Posterior cingulate gyrus (tissue), 11 donors: ENCODE measurements at regions of chr1 and their contacts with region 1.

Region 1: DNA sequence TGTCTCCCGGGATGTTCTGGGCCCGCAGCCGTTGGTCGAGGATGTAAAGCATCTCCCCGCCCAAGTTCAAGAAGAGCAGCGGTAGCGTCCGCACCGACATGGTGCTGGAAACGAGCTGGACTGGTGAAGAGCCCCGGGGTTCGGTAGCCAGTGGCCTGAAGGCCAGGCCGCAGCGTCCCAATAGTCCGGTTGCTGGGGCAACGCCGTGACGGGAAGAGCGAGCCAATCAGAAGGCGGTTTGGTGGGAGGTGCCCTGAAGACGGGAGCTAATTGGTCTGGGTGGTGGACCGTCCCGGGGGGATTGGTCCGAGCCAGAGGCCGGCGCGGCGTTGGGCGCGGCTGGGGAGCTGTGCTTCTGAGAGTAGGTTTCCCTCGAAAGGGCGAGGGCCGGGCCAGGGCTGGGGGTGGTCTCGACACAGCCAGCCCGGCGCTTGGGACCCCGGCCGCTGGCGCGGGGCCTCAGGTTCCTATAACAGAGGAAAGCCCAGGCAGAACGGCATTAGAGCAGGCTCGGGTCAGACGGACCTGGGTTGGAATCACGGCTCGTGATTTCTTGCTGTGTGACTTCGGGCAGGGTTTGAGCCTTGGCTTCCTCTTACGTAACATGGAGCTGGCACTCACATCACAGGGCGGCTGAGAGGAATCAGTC is at the start of gene OSCP1:
- DNase-seq: peak; percentile 88 to 99 (median 93)

Region 2: GRCh38 chr1:36109041-36109679 is 341.2 kb before region 1 on chr1:
- intact Hi-C with region 1: no loop called
- DNase-seq: no peak

Region 3: GRCh38 chr1:36463803-36464604 is 13.6 kb after region 1 on chr1 and contains the start of gene MRPS15:
- intact Hi-C with region 1: loop called (anchors 2 kb)
- DNase-seq: peak; percentile 95 to 99 (median 98)